Breast epithelium (tissue), 4 donors: ENCODE measurements at regions of chr16 and their contacts with region 1.

Region 1: DNA sequence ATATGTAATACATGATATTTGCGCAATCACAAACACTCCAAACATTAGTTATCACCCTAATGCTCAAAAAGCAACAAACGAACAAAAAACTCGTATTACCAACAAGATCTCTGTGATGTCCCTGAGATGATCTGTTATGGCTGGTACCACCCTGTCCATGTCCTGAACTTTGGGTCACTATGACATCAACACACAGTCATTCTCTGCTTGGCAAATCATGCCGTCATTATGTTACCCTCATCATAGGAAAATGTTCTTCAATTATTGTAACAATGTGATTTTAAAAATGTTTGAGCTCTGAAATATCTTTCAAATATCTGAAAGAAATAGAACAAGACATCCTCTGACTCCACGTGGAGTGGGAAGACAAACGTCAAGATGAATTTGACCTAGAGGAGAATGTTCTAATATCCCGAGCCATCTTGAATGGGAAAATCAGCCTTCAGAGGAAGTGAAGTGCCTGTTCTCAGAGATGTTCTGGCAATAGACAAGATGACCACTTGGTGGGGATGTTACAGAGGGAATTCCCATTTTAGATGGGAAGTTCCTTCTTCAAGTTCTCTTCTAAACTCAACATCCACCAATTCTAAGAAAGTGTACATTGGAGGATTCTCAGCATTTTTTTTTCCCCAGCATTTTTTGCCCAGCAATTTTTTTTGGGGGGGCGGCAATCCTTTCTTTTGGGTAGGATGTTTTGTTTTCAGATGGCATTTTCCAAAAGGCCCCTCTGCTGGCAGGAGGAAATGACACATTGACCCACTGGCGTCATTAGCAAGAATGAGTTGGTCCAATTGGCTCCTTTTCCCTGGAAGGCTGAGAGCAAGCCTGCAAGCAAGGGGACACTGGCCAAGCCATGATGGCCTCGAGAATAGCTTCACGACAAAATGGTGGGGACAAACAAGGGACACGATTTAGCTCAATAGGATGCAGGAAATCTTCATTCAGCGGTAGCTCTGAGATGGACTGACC is 3.7 kb upstream of the HSD17B2 start:
- DNase-seq: no peak
- H3K4me3 ChIP-seq: no peak overlapping the region
- H3K27ac ChIP-seq: no peak overlapping the region
- H3K4me1 ChIP-seq: no peaks in the 10 kb centered on the region
- H3K27me3 ChIP-seq: no peaks in the 10 kb centered on the region
- CTCF ChIP-seq: peak; percentile 50 to 78 (median 65)
- POLR2A ChIP-seq: no peak

Region 2: DNA sequence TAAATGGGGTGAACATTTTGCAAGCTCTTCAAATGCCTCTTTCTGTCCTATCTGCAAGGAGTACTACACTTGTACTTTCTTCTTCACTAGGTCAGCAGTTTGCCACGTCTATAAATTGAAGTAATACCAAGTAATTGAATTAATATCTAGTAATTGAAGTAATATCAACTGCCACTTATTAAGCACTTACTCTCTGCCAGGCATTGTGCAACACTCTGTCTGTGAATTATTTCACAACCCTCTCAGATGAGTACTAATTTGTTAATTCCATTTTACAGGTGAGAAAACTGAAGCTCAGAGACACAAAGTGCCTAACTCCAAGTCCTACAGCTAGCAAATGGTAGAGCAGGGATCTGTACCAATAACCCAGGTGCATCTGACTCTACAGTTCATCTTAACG is 24.2 kb before region 1 on chr16:
- intact Hi-C with region 1: loop called (anchors 1 kb)
- DNase-seq: no peak
- H3K4me3 ChIP-seq: no peak overlapping the region
- H3K27ac ChIP-seq: no peak overlapping the region
- H3K4me1 ChIP-seq: no peaks in the 10 kb centered on the region
- H3K27me3 ChIP-seq: peaks cover 0 to 3% of the 10 kb centered on the region in 2 donors
- CTCF ChIP-seq: no peak
- POLR2A ChIP-seq: no peak

Region 3: GRCh38 chr16:82169861-82170845 is 138.8 kb after region 1 on chr16 and contains the start of gene MPHOSPH6:
- intact Hi-C with region 1: loop called (anchors 10 kb)
- DNase-seq: peak; percentile 86 to 91
- H3K4me3 ChIP-seq: peak within 1 kb of the TSS; percentile 66 to 81 (median 78)
- H3K27ac ChIP-seq: peak within 1 kb of the TSS; percentile 91 to 96
- H3K4me1 ChIP-seq: no peaks in the 10 kb centered on the region
- H3K27me3 ChIP-seq: no peaks in the 10 kb centered on the region
- CTCF ChIP-seq: peak in 1 of 3 donors; percentile 17
- POLR2A ChIP-seq: no peak
- total RNA-seq, gene MPHOSPH6: 24.0 to 70.4 (median 60.0) TPM